Body of pancreas (tissue), 4 donors: ENCODE measurements at regions of chr19 and their contacts with region 1.

Region 1: DNA sequence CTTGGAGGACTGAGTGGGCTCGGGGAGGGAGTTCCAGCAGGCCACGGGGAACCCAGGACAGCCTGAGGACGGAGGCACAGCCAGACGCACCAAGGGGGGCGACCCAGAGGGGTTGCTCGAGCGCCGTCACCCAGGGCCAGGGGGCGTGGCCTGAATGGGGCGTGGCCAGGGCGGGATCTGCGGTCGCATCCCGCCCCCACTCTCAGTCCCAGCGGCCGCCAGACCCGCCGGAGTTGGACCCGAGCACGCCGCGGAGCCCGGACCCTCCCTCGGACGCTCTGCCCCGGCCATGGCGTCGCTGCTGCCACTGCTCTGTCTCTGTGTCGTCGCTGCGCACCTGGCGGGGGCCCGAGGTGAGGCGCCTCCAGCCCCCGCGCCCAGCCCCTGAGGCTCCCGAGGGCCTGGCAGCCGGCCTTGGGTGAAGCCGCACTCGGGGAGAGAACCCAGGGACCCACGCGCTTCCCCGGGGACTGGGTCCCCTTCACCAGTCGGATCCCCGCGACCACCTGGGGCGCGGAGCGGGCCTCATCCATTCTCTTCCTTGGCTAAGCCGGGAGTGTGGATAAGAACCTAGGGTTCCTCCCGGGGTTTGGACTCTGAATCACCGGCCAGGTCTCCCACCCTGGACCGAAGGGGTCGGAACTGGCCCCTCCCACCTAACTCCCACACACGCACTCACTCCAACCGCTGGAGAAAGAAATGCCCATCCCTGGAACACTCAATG is at the start of gene CILP2:
- DNase-seq: peak in 3 of 4 donors; percentile 31 to 55 (median 35)
- ATAC-seq: peak; percentile 15
- H3K4me3 ChIP-seq: no peak within 1 kb of the TSS
- H3K27ac ChIP-seq: no peak within 1 kb of the TSS
- H3K4me1 ChIP-seq: peaks cover 28% of the 10 kb centered on the region
- H3K27me3 ChIP-seq: peaks cover 0 to 30% of the 10 kb centered on the region in 2 donors
- CTCF ChIP-seq: no peak
- POLR2A ChIP-seq: no peak
- total RNA-seq, gene CILP2: 0.66 TPM in 1 of 2 donors, not detected in the other

Region 2: DNA sequence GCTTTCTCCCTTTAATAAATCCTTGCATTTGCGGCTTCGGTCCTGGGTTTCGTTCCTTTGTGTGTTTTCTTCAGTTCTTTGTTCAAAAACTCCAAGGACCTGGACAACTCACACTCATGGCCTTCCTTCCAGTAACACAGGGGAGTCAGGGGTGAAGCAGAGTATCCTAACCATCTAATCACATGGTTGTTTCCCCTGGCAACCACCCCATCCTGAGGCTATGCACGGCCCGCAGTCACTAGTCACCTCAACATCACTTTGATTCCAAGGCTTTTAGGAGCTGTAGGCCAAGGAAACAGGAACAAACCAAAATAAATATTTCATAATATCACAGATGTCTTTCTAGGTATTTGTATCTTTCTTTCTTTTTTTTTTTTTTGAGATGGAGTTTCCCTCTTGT is 159.4 kb after region 1 on chr19:
- intact Hi-C with region 1: no loop called
- DNase-seq: no peak
- ATAC-seq: no peak
- H3K4me3 ChIP-seq: no peak overlapping the region
- H3K27ac ChIP-seq: no peak overlapping the region
- H3K4me1 ChIP-seq: no peaks in the 10 kb centered on the region
- H3K27me3 ChIP-seq: no peaks in the 10 kb centered on the region
- CTCF ChIP-seq: no peak
- POLR2A ChIP-seq: no peak

Region 3: GRCh38 chr19:19956434-19957075 is 418.3 kb after region 1 on chr19:
- intact Hi-C with region 1: loop called (anchors 5 kb)
- DNase-seq: no peak
- ATAC-seq: no peak
- H3K4me3 ChIP-seq: no peak overlapping the region
- H3K27ac ChIP-seq: no peak overlapping the region
- H3K4me1 ChIP-seq: no peaks in the 10 kb centered on the region
- H3K27me3 ChIP-seq: no peaks in the 10 kb centered on the region
- CTCF ChIP-seq: no peak
- POLR2A ChIP-seq: no peak